ENCODE measurements at regions of chr16 and their contacts with region 1.

Region 1: GRCh38 chr16:70349783-70350182 is 3.1 kb downstream of the DDX19A start:
- DNase-seq: no peak
- ATAC-seq: no peak
- H3K4me3 Mint-ChIP-seq: no peak overlapping the region
- H3K27ac Mint-ChIP-seq: no peak overlapping the region
- H3K4me1 Mint-ChIP-seq: peaks cover 28% of the 10 kb centered on the region
- H3K27me3 Mint-ChIP-seq: no peaks in the 10 kb centered on the region

Region 2: GRCh38 chr16:70289229-70290098 is 60.3 kb before region 1 on chr16 and contains the start of gene AARS1:
- CTCF ChIA-PET with region 1: no interaction called
- POLR2A ChIA-PET with region 1: interaction called, 26 read pairs
- DNase-seq: peak; percentile 97
- ATAC-seq: peak; percentile 97
- H3K4me3 Mint-ChIP-seq: peak within 1 kb of the TSS; percentile 100
- H3K27ac Mint-ChIP-seq: peak within 1 kb of the TSS; percentile 100
- H3K4me1 Mint-ChIP-seq: peaks cover 36% of the 10 kb centered on the region
- H3K27me3 Mint-ChIP-seq: no peaks in the 10 kb centered on the region
- total RNA-seq, gene AARS1: 98.5 to 103 TPM

Region 3: DNA sequence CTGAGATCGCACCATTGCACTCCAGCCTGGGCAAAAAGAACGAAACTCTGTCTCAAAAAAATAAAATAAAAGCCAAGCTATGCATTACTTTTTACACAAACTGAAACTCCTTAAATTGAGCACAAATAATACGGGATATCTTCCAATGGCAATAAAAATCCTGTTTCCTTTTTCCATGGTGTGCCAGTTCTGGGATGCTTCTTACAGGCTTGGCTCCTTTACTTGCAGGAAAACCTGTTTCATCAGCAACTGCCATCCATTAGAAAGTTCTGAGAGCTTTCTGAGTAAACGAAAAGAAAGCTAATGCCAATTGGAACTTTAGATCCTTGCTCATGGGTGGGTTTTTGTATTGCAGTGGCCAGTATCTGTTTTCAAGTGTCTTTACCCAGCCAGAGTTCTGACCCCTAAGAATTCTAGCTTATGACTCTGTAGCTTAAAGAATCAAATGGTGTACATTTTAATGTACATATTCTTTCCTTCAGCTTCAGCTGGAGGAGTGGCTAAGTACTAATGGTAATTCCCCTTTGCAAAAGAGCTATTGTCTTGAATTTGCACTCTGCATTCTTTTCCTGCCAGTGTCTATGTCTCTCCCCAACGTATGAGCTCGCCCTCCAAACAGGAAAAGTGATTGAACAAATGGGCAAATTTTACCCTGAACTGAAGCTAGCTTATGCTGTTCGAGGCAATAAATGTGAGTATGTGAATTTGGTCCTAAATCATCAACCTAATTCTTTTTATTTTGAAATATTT is 24.6 kb before region 1 on chr16:
- CTCF ChIA-PET with region 1: interaction called, 3 read pairs
- POLR2A ChIA-PET with region 1: interaction called, 10 read pairs
- DNase-seq: no peak
- ATAC-seq: no peak
- H3K4me3 Mint-ChIP-seq: no peak overlapping the region
- H3K27ac Mint-ChIP-seq: no peak overlapping the region
- H3K4me1 Mint-ChIP-seq: no peaks in the 10 kb centered on the region
- H3K27me3 Mint-ChIP-seq: no peaks in the 10 kb centered on the region

Region 4: GRCh38 chr16:70364399-70364798 is 14.6 kb after region 1 on chr16:
- CTCF ChIA-PET with region 1: interaction called, 9 read pairs
- POLR2A ChIA-PET with region 1: interaction called, 13 read pairs
- DNase-seq: no peak
- ATAC-seq: no peak
- H3K4me3 Mint-ChIP-seq: no peak overlapping the region
- H3K27ac Mint-ChIP-seq: no peak overlapping the region
- H3K4me1 Mint-ChIP-seq: no peaks in the 10 kb centered on the region
- H3K27me3 Mint-ChIP-seq: no peaks in the 10 kb centered on the region

Region 5: DNA sequence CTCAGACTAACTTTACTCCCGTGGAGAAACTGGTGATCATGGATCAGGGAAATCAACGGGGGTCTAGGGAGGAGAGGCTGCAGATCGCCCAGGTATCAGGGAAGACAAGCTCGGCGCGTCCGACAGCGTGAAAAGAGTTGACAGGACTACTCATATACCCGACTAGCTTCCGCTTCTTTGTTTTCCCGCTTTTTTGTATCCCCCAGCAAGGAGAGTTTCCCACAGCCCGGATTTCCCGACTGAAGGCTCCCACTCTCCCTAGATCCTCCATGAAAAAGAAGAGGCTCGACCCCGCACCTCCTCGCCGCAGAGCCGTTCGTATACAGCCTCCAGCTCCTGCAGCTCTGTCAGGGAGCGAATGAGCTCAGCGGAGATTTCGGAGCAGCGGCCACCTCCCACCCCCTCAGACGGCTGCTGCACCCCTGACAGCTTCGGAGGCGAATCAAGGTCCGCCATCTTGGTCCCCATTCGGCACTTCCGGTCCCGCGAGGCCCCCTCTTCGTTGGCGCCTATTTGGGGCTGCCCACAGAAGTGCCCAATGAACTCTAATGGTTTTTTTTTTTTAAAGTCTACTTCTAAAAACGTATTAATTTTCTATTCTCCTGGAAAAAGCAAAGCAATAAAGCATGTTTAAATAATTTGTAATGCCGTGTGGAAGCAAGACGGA is 173.4 kb after region 1 on chr16 and contains the start of gene COG4:
- CTCF ChIA-PET with region 1: interaction called, 7 read pairs
- POLR2A ChIA-PET with region 1: interaction called, 21 read pairs
- DNase-seq: peak; percentile 95
- ATAC-seq: peak; percentile 76
- H3K4me3 Mint-ChIP-seq: peak within 1 kb of the TSS; percentile 98
- H3K27ac Mint-ChIP-seq: peak within 1 kb of the TSS; percentile 99
- H3K4me1 Mint-ChIP-seq: peaks cover 49% of the 10 kb centered on the region
- H3K27me3 Mint-ChIP-seq: no peaks in the 10 kb centered on the region
- total RNA-seq, gene COG4: 62.1 to 71.3 TPM